ENCODE measurements at regions of chr19 and their contacts with region 1.

Region 1: DNA sequence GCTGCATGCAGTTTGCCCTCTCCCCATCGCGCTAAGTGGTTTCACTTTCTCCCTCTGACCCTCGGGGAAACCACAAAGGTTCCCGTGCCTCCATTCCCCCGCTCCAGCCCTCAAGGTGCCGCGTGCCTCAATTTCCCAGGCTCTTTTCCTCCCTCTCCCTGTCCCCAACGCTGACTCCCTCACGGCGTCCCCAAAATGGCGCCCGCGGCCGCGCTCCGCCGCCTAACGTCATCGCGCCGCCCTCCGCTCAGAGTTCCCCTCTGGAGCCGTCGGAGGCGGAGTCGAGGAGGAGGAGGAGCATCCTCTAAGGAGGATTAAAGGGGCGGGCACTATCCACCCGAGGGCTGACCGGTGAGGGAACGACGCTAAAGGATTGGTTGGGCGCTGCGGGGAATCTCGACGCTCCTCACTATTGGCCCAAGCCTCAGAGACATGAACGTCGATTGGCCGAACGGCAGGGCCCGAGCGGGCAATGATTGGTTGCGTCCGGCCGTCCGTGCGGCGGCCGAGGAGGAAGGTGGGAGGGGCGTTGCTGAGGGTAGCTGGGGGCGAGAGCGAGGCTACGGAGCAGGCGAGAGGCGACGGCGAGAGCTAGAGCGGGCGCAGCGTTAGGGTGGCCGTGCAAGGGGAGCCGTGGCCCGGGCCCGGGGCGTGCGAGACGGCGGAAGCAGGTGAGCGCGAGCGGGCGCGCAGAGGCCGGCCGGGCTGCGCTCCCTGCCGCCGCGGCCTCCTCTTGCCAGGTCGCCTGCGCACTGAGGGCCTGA is at the start of gene ZNF574:
- DNase-seq: peak; percentile 93 to 98 (median 97)
- H3K4me3 ChIP-seq: peak within 1 kb of the TSS; percentile 61 to 97 (median 84)
- H3K27ac ChIP-seq: peak within 1 kb of the TSS; percentile 60 to 99 (median 95)
- H3K27me3 ChIP-seq: no peaks in the 10 kb centered on the region
- CTCF ChIP-seq: peak in 32 of 56 donors; percentile 5 to 53 (median 23)
- total RNA-seq, gene ZNF574: 10.0 to 20.4 (median 14.5) TPM

Region 2: GRCh38 chr19:41859618-41860418 is 216.0 kb before region 1 on chr19 and contains the start of gene RPS19:
- intact Hi-C with region 1: loop called (anchors 5 kb)
- DNase-seq: peak; percentile 97 to 99 (median 98)
- H3K4me3 ChIP-seq: peak within 1 kb of the TSS; percentile 51 to 99 (median 90)
- H3K27ac ChIP-seq: peak within 1 kb of the TSS; percentile 79 to 99 (median 96)
- H3K27me3 ChIP-seq: no peaks in the 10 kb centered on the region
- CTCF ChIP-seq: peak; percentile 44 to 89 (median 78)
- total RNA-seq, gene RPS19: 344 to 718 (median 462) TPM

Region 3: DNA sequence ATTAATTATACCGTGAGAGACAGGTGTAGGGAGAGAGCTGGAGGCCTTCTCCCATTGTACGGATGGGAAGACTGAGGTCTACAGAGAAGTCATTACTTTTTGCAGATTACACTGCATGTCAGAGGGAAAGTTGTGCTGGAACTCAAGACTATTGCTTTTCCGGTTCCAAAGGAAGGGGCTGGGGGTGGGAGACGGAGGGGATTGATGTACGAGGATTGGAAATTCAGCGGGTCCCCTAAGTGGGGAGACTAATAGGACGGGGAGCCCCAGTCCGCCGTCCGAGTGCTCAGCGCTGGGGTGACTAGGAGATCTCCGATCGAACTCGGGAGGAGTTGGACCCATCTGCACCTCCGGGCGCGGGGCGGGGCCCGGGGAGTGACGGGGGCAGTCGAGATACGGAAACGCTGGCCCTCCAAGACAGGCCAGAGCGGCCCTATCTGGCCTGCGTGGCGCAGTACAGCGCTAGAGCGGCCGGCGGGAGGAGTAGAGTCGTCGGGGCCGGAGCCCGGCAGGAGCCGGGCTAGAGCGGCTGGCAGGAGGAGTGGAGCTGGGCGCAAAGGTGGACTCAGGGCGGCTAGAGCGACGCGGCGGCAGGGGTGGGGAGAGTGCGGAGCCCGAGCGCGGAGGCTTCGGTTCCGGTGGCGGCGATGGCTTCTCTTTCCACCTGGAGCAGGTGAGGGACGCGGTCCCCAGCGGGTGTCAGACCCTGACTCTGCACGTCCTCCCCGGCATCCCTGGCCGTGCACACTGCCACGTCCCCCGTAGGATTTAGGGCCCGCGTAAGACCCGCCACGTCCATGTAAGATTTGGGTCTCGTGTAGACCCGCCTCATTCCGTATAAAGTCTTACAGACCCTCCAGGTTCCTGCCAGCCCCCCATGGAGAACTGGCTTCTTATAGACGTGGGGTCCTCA is 191.7 kb before region 1 on chr19:
- intact Hi-C with region 1: loop called in 1 of 2 experiments (anchors 10 kb)
- DNase-seq: peak; percentile 89 to 98 (median 96)
- H3K4me3 ChIP-seq: peak overlapping the region; percentile 61 to 99 (median 90)
- H3K27ac ChIP-seq: peak overlapping the region in 54 of 59 donors; percentile 3 to 91 (median 80)
- H3K27me3 ChIP-seq: no peaks in the 10 kb centered on the region
- CTCF ChIP-seq: peak in 54 of 56 donors; percentile 17 to 76 (median 54)

Region 4: DNA sequence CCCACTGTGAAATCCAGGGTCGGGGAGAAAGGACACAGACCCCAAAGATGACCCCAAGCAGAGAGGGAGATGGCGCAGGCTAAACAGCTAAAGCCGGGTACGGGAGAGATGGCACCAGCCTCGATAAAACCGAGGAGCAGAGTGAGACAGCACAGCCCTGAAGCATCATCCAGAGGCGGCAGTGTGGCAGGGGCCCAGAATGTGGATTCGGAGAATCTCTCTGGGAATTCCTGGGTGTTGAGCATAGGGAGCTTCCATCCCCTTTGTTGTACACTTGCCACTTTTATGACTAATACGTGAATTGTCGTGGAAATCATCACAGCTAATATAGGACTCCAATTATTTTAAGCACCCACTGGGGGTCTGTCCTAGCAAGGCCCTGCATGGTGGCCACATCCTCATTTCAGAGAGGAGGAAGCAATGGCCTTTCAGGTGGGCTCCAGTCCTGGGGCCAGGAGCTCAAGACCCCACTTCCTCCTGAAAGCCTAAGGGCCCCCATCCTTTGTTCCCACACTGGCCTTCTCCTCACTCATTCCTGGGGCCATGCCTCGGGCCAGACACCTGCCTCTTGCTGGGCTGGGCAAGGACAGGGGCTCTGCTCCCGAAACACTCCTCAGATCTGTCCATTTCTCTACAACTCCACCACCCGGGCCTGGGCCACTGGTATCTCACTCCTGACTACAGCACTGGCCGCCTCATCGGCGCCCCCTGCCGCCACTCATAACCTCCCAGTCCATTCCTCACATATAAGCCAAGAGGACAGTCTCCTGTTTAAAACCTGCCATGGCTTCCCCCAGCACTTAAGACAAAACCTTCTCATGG is 52.5 kb before region 1 on chr19:
- intact Hi-C with region 1: no loop called
- DNase-seq: peak in 1 of 10 donors; percentile 17
- H3K4me3 ChIP-seq: no peak overlapping the region
- H3K27ac ChIP-seq: peak overlapping the region in 1 of 59 donors; percentile 53
- H3K27me3 ChIP-seq: no peaks in the 10 kb centered on the region
- CTCF ChIP-seq: peak in 1 of 56 donors; percentile 18

Region 5: DNA sequence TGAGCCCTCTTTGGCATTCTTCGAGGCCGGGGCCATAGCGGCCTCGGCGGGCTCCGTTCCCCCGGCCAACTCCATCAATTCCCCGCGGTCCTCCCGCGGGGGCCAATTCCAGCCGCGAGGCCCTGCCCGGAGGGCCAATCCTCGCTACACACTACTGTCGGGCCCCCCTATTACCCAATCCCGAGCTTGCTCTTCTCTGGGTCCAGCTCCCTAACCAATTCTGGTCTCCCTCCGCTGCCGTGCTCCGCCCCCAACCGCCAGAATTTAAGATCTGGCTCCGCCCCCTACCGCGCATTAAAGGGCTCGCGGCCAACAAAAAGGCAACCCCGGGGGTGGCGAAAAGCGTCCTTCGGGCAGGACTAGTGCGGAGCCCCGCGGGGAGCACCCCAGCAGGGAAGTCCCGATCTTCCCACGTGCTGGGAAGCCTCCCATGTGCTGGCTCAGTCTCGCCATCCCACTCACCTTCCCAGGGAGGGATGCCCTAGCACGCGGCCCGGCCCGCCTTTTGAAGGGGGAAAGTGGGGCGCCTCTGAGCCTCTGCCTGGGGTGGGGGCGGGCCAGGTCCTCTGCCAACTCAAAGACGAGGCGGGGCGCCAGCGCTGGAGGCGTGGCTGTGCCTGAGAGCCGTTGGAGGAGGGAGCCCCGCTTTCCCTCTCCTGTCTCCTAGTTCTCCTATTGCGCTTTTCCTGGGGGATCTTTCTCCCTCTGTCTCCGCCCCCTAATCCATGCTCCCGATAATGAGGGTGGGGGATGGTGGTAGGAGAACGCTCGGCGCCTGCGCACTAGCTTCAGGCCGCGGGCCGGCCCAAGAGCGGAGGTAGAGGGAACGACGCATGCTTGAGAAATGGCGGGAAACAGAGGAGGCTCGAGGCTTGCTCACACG is 347.9 kb after region 1 on chr19:
- intact Hi-C with region 1: loop called in 1 of 2 experiments (anchors 10 kb)
- DNase-seq: peak; percentile 80 to 96 (median 94)
- H3K4me3 ChIP-seq: peak overlapping the region; percentile 60 to 100 (median 84)
- H3K27ac ChIP-seq: peak overlapping the region; percentile 0 to 96 (median 88)
- H3K27me3 ChIP-seq: no peaks in the 10 kb centered on the region
- CTCF ChIP-seq: peak in 32 of 56 donors; percentile 7 to 63 (median 32)